PC-3 (cell line): ENCODE measurements at regions of chr12 and their contacts with region 1.

Region 1: GRCh38 chr12:66169221-66170170 is at the start of gene TMBIM4:
- DNase-seq: peak; percentile 82
- ATAC-seq: peak; percentile 85
- H3K4me3 ChIP-seq: peak within 1 kb of the TSS; percentile 89
- H3K27ac ChIP-seq: peak within 1 kb of the TSS; percentile 95
- H3K4me1 ChIP-seq: peaks cover 9% of the 10 kb centered on the region
- H3K27me3 ChIP-seq: no peaks in the 10 kb centered on the region
- CTCF ChIP-seq: peak; percentile 61
- total RNA-seq, gene TMBIM4: 36.3 and 63.2 TPM in 2 replicates

Region 2: DNA sequence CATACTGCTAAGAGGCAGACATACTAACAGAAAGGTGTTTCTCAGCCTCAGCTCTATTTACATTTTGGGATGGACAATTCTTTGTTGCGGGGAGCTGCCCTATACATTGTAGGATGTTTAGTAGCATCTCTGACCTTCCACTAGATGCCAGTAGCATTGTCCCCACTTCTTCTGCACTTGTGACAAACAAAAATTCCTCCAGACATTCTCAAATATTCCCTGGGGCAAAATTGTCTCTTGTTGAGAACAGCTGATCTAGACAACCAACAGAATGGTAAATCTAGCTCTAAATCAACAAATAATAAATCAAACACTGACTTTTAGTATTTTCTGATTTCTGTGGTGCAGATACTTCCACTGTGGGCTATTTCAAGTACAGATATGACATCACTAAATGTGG is 830.4 kb before region 1 on chr12:
- CTCF ChIA-PET with region 1: no interaction called
- POLR2A ChIA-PET with region 1: interaction called, 12 read pairs
- intact Hi-C with region 1: no loop called
- DNase-seq: peak; percentile 71
- ATAC-seq: peak; percentile 27; the same call in 1 of the 2 replicates
- H3K4me3 ChIP-seq: no peak overlapping the region
- H3K27ac ChIP-seq: no peak overlapping the region
- H3K4me1 ChIP-seq: peaks cover 9% of the 10 kb centered on the region
- H3K27me3 ChIP-seq: no peaks in the 10 kb centered on the region
- CTCF ChIP-seq: peak; percentile 27; the same call in 1 of the 2 replicates

Region 3: DNA sequence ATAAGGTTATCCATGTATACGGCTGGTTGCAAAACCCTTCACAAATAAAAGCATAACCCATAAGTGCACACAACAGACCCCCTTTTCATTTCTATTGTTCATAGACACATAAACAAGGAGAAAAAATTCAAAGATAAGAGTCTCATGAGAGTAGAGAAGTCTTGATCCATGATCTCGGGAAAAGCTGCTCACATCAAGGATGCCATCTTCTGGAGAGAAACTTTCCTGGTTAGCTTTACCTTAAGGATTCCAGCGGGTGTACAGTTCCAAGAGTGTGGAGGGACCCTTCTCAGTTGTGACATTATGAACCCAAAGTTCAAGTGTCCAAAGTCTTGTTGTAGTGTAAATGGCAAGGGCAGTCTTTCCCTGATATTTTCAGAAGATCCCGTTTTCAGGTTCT is 183.4 kb before region 1 on chr12:
- CTCF ChIA-PET with region 1: no interaction called
- POLR2A ChIA-PET with region 1: no interaction called
- intact Hi-C with region 1: no loop called
- DNase-seq: no peak
- ATAC-seq: no peak
- H3K4me3 ChIP-seq: no peak overlapping the region
- H3K27ac ChIP-seq: no peak overlapping the region
- H3K4me1 ChIP-seq: no peaks in the 10 kb centered on the region
- H3K27me3 ChIP-seq: no peaks in the 10 kb centered on the region
- CTCF ChIP-seq: no peak

Region 4: GRCh38 chr12:66154776-66155175 is 14.7 kb before region 1 on chr12:
- CTCF ChIA-PET with region 1: no interaction called
- POLR2A ChIA-PET with region 1: interaction called, 3 read pairs
- intact Hi-C with region 1: loop called (anchors 2 kb)
- DNase-seq: no peak
- ATAC-seq: peak; percentile 74
- H3K4me3 ChIP-seq: no peak overlapping the region
- H3K27ac ChIP-seq: no peak overlapping the region
- H3K4me1 ChIP-seq: peaks cover 20% of the 10 kb centered on the region
- H3K27me3 ChIP-seq: no peaks in the 10 kb centered on the region
- CTCF ChIP-seq: no peak